Caco-2 (cell line): ENCODE measurements at regions of chr3 and their contacts with region 1.

Region 1: DNA sequence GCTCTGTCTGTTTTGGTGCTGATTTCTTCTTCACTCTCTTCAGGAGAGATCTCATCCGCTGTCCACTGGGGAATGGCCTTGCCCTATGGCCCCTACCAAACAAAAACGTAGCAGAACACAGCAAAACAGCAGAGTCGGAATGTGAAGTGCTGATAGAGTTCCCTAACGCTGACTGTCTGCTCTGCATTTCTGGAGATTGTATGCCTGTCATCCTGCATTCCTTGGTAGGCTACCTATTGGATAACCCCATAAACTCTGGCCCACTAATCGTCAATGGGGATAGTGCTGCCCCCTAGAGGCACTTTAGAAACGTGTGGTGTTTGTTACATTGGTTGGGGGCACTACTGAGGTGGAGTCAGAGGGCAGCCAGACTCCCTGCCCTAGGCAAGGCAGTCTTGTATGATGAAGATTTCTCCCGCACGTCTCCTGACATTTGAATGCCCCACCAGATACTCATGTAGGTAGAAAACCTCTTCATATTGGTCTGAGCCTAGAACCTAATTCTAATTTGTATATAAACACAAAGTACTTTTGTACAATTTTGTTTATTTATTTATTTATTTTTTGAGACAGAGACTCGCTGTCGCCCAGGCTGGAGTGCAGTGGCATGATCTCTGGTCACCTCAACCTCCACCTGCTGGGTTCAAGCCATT is 15.6 kb upstream of the MAGEF1 start:
- DNase-seq: peak; percentile 73 to 78
- H3K4me3 ChIP-seq: no peak overlapping the region
- H3K4me3 Mint-ChIP-seq: no peak overlapping the region
- H3K27ac Mint-ChIP-seq: no peak overlapping the region
- H3K4me1 ChIP-seq: peaks cover 5% of the 10 kb centered on the region; the same call in 1 of the 2 replicates
- H3K4me1 Mint-ChIP-seq: no peaks in the 10 kb centered on the region
- H3K27me3 ChIP-seq: no peaks in the 10 kb centered on the region
- H3K27me3 Mint-ChIP-seq: no peaks in the 10 kb centered on the region
- CTCF ChIP-seq: peak; percentile 44 to 88

Region 2: GRCh38 chr3:184748219-184749135 is 21.0 kb after region 1 on chr3:
- CTCF ChIA-PET with region 1: interaction called, 3 read pairs
- POLR2A ChIA-PET with region 1: no interaction called
- intact Hi-C with region 1: loop called (anchors 2 kb)
- DNase-seq: peak; percentile 53 to 57
- H3K4me3 ChIP-seq: no peak overlapping the region
- H3K4me3 Mint-ChIP-seq: no peak overlapping the region
- H3K27ac Mint-ChIP-seq: no peak overlapping the region
- H3K4me1 ChIP-seq: peaks cover 21% of the 10 kb centered on the region
- H3K4me1 Mint-ChIP-seq: peaks cover 11% of the 10 kb centered on the region
- H3K27me3 ChIP-seq: no peaks in the 10 kb centered on the region
- H3K27me3 Mint-ChIP-seq: peaks cover 3% of the 10 kb centered on the region
- CTCF ChIP-seq: peak; percentile 52 to 78

Region 3: GRCh38 chr3:184777336-184778004 is 50.0 kb after region 1 on chr3:
- CTCF ChIA-PET with region 1: no interaction called
- POLR2A ChIA-PET with region 1: no interaction called
- intact Hi-C with region 1: loop called (anchors 2 kb)
- DNase-seq: peak; percentile 85 to 92
- H3K4me3 ChIP-seq: no peak overlapping the region
- H3K4me3 Mint-ChIP-seq: no peak overlapping the region
- H3K27ac Mint-ChIP-seq: no peak overlapping the region
- H3K4me1 ChIP-seq: no peaks in the 10 kb centered on the region
- H3K4me1 Mint-ChIP-seq: peaks cover 6% of the 10 kb centered on the region
- H3K27me3 ChIP-seq: no peaks in the 10 kb centered on the region
- H3K27me3 Mint-ChIP-seq: peaks cover 3% of the 10 kb centered on the region
- CTCF ChIP-seq: peak; percentile 61 to 81